Activated CD4-positive, alpha-beta memory T cell treated with anti-CD3 and anti-CD28 coated beads for 36 hours (primary cell): ENCODE measurements at regions of chr4 and their contacts with region 1.

Region 1: DNA sequence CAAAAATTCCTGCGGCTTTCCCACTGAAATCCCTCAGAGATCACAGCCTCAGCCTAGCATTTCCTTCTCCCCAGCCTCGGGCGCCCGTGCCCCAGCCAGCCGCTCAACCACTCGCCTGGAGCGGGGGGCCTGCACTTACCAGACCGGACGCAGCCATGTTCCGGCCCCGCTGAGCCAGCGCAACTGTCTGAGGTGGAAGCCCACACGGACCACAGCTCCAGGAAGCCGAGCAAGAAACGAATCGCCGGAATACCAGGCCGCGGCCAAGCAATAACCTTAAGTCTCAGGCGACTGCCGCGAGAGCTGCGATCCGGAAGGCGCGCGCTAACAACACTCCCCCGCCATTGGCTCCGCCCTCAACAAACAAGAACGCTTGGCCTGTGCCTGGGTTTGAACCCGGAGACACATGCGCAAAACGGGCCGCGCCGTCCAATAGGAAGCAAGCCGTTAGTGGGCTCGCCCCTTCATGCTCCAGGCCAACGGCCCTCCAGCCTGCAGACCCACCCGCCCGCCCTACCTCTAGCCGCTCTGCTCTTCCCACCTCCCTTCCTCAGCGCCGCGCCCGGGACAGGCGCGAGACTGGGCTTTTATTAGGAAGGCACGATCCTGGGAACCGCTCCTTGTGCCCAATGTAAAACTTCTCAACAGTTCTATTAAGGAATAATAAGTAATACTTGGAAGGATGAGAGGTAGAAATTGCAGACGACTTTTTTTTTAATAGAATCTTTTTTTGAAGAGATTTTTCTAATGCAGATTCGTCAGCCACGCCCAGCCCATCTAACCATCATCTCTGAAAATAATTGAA is at the start of gene CENPC:
- DNase-seq: peak; percentile 97
- H3K4me3 Mint-ChIP-seq: peak within 1 kb of the TSS; percentile 88
- H3K27ac Mint-ChIP-seq: peak within 1 kb of the TSS; percentile 92
- H3K4me1 Mint-ChIP-seq: peaks cover 37% of the 10 kb centered on the region
- H3K27me3 Mint-ChIP-seq: no peaks in the 10 kb centered on the region
- total RNA-seq, gene CENPC: 32.6 to 33.5 TPM

Region 2: DNA sequence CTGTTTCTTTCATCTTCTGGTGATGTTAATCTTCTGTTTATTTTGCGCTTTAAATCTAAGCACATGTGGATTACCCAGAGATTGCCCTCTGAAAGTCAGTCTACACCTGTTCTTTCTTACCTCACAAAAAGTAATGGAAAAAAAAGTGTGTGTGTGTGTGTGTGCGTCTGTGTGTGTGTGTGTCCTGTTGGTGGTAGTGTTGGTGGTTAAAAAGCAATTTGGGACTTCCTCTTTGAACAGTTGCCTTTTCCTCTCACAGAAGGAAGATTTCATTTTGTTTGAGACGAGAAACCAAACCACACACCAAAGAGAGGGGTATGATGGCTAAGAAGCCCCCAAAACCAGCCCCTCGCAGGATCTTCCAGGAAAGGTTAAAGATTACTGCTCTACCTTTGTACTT is 13.1 kb after region 1 on chr4 and contains the start of gene STAP1:
- CTCF ChIA-PET with region 1: no interaction called
- POLR2A ChIA-PET with region 1: interaction called, 3 read pairs
- intact Hi-C with region 1: loop called (anchors 1 kb)
- DNase-seq: peak; percentile 27
- H3K4me3 Mint-ChIP-seq: peak within 1 kb of the TSS; percentile 76
- H3K27ac Mint-ChIP-seq: peak within 1 kb of the TSS; percentile 76
- H3K4me1 Mint-ChIP-seq: peaks cover 10% of the 10 kb centered on the region
- H3K27me3 Mint-ChIP-seq: no peaks in the 10 kb centered on the region
- total RNA-seq, gene STAP1: 5.5 to 5.9 TPM

Region 3: DNA sequence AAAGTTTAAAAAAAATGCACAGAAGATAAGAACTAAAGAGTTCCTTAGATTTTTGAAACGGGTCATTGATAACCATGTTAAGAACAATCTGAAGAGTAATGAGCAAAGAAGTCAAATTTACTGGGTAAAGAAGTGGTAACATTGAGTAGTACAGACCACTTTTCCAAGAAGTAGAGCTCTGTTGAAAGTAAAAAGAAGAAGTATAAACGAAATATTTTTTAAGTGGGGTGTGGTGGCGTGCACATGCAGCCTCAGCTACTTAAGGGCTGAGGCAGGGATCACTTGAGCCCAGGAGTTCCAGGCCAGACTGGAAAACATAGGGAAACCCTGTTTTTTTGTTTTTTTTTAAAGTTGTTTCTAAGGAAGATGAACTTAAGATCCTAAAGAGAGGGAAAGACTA is 87.1 kb after region 1 on chr4:
- CTCF ChIA-PET with region 1: no interaction called
- POLR2A ChIA-PET with region 1: no interaction called
- intact Hi-C with region 1: loop called (anchors 5 kb)
- DNase-seq: no peak
- H3K4me3 Mint-ChIP-seq: no peak overlapping the region
- H3K27ac Mint-ChIP-seq: no peak overlapping the region
- H3K4me1 Mint-ChIP-seq: no peaks in the 10 kb centered on the region
- H3K27me3 Mint-ChIP-seq: no peaks in the 10 kb centered on the region

Region 4: GRCh38 chr4:67700738-67701516 is 155.5 kb after region 1 on chr4 and contains the start of gene UBA6:
- CTCF ChIA-PET with region 1: interaction called, 3 read pairs
- POLR2A ChIA-PET with region 1: interaction called, 12 read pairs
- intact Hi-C with region 1: loop called (anchors 1 kb)
- DNase-seq: peak; percentile 98
- H3K4me3 Mint-ChIP-seq: peak within 1 kb of the TSS; percentile 92
- H3K27ac Mint-ChIP-seq: peak within 1 kb of the TSS; percentile 90
- H3K4me1 Mint-ChIP-seq: peaks cover 55% of the 10 kb centered on the region
- H3K27me3 Mint-ChIP-seq: no peaks in the 10 kb centered on the region
- total RNA-seq, gene UBA6: 107 to 112 TPM

Region 5: GRCh38 chr4:67909905-67910584 is 364.6 kb after region 1 on chr4:
- CTCF ChIA-PET with region 1: interaction called, 4 read pairs
- POLR2A ChIA-PET with region 1: no interaction called
- intact Hi-C with region 1: loop called (anchors 1 kb)
- DNase-seq: no peak
- H3K4me3 Mint-ChIP-seq: no peak overlapping the region
- H3K27ac Mint-ChIP-seq: no peak overlapping the region
- H3K4me1 Mint-ChIP-seq: no peaks in the 10 kb centered on the region
- H3K27me3 Mint-ChIP-seq: peaks cover 6% of the 10 kb centered on the region

Region 6: DNA sequence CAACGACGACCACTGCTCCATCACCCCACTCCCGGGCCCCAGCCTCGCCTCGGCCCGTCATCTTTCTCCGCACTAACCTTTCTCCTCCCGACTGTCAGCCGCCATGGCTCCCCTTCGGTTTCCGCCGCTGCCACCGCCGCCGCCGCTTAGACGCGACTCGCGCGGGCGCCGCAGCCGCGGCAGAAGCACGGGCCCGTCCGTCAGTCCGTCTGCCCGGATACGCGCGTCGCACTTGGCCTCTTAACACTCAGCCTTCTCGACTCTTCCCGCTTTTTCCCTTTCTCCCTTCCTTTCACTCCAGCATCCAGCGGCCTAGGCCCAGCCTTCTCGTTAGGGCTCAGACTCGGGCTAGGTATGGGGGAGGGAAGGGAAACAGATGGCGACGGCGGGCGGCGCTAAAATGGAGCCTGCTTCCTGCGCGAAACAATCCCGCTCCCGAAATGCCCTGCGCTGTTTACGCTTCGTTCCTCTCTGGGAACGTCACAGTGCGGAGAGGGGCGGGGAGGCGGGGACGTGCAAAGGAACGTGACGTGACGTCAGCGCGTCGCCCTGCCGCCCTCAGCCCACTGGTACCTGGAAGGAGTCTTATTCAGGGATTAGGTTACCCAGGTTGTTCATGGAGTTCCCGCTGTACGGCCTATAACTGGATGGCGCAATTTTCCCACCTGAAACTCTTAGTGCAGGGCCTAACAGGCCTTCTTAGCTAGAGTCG is 804.4 kb after region 1 on chr4 and contains the start of gene YTHDC1:
- CTCF ChIA-PET with region 1: no interaction called
- POLR2A ChIA-PET with region 1: no interaction called
- intact Hi-C with region 1: loop called (anchors 2 kb)
- DNase-seq: peak; percentile 97
- H3K4me3 Mint-ChIP-seq: peak within 1 kb of the TSS; percentile 97
- H3K27ac Mint-ChIP-seq: peak within 1 kb of the TSS; percentile 98
- H3K4me1 Mint-ChIP-seq: peaks cover 33% of the 10 kb centered on the region
- H3K27me3 Mint-ChIP-seq: no peaks in the 10 kb centered on the region
- total RNA-seq, gene YTHDC1: 66.8 to 68.5 TPM